H1 (cell line): ENCODE measurements at regions of chr17 and their contacts with region 1.

Region 1: DNA sequence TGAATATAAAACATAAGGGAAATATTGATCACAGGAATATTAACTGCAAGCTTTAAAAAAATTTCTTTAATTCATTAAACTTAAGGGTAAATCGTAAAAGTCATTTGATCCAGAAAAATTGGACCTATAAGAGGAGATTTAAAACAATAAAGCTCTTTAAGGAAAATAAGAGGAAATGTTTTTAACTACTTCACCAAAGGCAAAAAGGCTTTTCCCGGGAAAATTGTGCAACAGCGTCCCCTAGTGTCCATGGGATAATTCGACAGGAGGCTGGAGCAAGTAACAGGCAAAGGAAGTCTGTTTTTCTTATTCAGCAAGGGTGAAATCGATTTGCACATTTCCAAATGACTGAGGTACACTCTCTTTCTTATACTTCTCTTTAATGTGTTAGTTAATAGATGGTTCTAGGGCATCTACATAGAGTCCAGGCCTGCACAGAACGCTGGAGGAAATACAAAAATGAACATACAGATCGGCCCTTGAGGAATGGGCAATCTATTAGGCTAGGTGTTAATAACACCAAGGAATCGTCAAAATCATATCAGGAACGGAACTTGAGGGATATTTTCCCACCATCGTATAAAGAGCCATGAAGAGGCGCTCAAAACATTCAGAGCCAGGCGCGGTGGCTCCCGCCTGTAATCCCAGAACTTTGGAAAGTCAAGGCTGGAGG is 61.4 kb downstream of the ZNF18 start:
- DNase-seq: peak; percentile 36 to 89
- H3K4me3 ChIP-seq: no peak overlapping the region
- H3K27ac ChIP-seq: no peak overlapping the region
- H3K4me1 ChIP-seq: no peaks in the 10 kb centered on the region
- H3K27me3 ChIP-seq: no peaks in the 10 kb centered on the region
- CTCF ChIP-seq: peak; percentile 61 to 92 (median 83)
- EP300 ChIP-seq: no peak
- POLR2A ChIP-seq: no peak
- RAD21 ChIP-seq: peak; percentile 97 to 98

Region 2: GRCh38 chr17:11742886-11743285 is 193.0 kb before region 1 on chr17:
- CTCF ChIA-PET with region 1: interaction called, 14 read pairs
- POLR2A ChIA-PET with region 1: no interaction called
- DNase-seq: no peak
- H3K4me3 ChIP-seq: no peak overlapping the region
- H3K27ac ChIP-seq: no peak overlapping the region
- H3K4me1 ChIP-seq: no peaks in the 10 kb centered on the region
- H3K27me3 ChIP-seq: no peaks in the 10 kb centered on the region
- CTCF ChIP-seq: peak in 2 of 3 experiments; percentile 58 to 71; a peak in 3 of 4 replicates
- EP300 ChIP-seq: no peak
- POLR2A ChIP-seq: no peak
- RAD21 ChIP-seq: peak; percentile 81 to 83

Region 3: GRCh38 chr17:11909348-11909747 is 26.5 kb before region 1 on chr17:
- CTCF ChIA-PET with region 1: interaction called, 11 read pairs
- POLR2A ChIA-PET with region 1: no interaction called
- DNase-seq: peak in 1 of 2 experiments; percentile 57
- H3K4me3 ChIP-seq: no peak overlapping the region
- H3K27ac ChIP-seq: no peak overlapping the region
- H3K4me1 ChIP-seq: no peaks in the 10 kb centered on the region
- H3K27me3 ChIP-seq: no peaks in the 10 kb centered on the region
- CTCF ChIP-seq: peak; percentile 66 to 84 (median 77)
- EP300 ChIP-seq: no peak
- POLR2A ChIP-seq: no peak
- RAD21 ChIP-seq: peak; percentile 81 to 86

Region 4: DNA sequence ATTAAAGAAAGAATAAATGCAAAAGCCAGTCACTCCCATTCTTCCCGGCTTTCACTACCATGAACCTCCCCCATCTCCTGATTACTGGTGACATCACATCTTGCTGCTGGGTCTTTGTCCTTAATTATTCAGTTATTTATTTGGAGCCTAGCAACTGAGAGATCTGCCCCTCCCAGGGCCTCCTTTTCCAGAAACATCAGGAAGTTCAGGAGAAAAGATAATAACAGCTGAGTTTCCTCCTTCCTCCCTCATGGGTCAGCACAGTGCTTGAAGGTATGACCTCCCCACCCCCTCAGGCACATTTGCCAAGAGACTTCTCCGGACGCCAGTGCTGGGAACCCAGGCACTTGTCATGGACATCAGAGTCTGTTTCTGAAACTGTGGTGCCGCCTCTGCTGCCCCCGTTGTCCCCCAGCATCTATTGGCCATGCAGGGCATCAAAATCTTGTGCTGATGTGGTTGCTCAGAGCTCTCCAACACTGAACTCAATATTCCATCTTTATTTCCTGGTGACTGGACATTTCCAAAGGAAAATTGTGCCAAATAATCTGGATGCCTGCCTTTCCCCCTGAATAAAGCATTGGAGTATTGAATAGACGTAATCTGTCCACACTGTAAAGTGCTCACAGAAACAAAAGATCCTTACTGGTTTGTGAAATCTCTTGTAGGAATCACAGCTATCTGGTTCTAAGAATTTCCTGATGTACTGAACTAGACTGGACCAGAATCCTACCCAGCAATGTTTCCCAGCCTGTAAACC is 10.4 kb before region 1 on chr17:
- CTCF ChIA-PET with region 1: interaction called, 51 read pairs
- POLR2A ChIA-PET with region 1: no interaction called
- DNase-seq: no peak
- H3K4me3 ChIP-seq: no peak overlapping the region
- H3K27ac ChIP-seq: no peak overlapping the region
- H3K4me1 ChIP-seq: peaks cover 0 to 4% (median 2%) of the 10 kb centered on the region in 4 experiments; a peak in 3 of 7 replicates
- H3K27me3 ChIP-seq: no peaks in the 10 kb centered on the region
- CTCF ChIP-seq: no peak
- EP300 ChIP-seq: no peak
- POLR2A ChIP-seq: no peak
- RAD21 ChIP-seq: no peak

Region 5: GRCh38 chr17:11980813-11981212 is 44.9 kb after region 1 on chr17:
- CTCF ChIA-PET with region 1: interaction called, 13 read pairs
- POLR2A ChIA-PET with region 1: no interaction called
- DNase-seq: no peak
- H3K4me3 ChIP-seq: no peak overlapping the region
- H3K27ac ChIP-seq: no peak overlapping the region
- H3K4me1 ChIP-seq: no peaks in the 10 kb centered on the region; a peak in 1 of 7 replicates
- H3K27me3 ChIP-seq: no peaks in the 10 kb centered on the region
- CTCF ChIP-seq: peak in 1 of 3 experiments; percentile 2; a peak in 1 of 4 replicates
- EP300 ChIP-seq: no peak
- POLR2A ChIP-seq: no peak
- RAD21 ChIP-seq: no peak

Region 6: GRCh38 chr17:12164085-12164484 is 228.2 kb after region 1 on chr17:
- CTCF ChIA-PET with region 1: no interaction called
- POLR2A ChIA-PET with region 1: no interaction called
- DNase-seq: no peak
- H3K4me3 ChIP-seq: no peak overlapping the region
- H3K27ac ChIP-seq: no peak overlapping the region
- H3K4me1 ChIP-seq: no peaks in the 10 kb centered on the region
- H3K27me3 ChIP-seq: no peaks in the 10 kb centered on the region
- CTCF ChIP-seq: no peak
- EP300 ChIP-seq: no peak
- POLR2A ChIP-seq: no peak
- RAD21 ChIP-seq: no peak